Thyroid gland (tissue), 4 donors: ENCODE measurements at regions of chr2 and their contacts with region 1.

Region 1: GRCh38 chr2:26968001-26968400 is 2.4 kb upstream of the MAPRE3 start:
- DNase-seq: no peak
- H3K4me3 ChIP-seq: no peak overlapping the region
- H3K27ac ChIP-seq: no peak overlapping the region
- H3K4me1 ChIP-seq: peaks cover 5 to 8% of the 10 kb centered on the region in 2 donors
- H3K27me3 ChIP-seq: no peaks in the 10 kb centered on the region
- CTCF ChIP-seq: no peak
- POLR2A ChIP-seq: no peak

Region 2: DNA sequence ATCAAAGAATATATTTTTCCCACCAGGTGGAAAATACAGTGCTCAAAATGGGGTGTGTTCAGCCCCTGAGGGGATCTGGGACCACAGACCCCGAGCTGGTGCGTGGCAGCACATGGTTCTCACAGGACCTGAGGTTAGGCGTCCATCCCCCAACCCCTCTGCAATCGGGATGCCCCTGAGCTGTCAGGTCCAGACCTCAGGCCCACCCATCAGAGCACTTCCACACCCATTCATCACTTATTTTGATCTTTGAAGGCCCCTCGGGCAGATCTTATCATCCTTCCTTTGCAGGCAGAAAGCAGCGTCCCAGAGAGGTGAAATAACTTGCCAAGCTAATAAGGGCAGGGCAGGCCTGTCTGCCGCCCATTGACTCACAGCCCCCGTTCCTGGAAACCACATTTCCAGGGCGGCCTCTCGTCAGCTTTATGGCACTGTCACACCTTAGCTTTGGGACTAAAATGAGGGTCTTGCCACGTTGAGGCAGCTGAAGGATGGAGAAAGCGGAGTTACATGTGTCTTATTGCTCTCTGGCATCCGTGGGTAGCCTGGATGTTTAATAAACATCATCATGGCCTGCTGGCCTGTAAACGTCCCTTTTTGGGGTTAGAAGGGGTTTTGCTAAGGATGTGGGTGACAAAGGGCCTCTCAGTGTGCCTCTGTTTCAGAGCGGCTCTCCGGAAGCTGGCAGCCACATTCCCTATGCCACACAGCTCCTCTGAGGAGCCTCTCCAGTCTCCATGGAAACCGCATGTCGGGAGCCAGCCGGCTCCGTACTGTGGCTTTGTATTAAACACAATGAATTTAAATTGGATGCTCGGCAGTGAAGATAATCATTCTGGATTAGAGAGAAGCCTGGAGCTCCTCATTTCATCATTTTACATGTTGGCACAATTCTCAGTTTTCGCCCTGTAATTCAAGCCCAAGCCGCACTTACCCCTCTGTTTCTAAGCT is 55.8 kb before region 1 on chr2:
- intact Hi-C with region 1: no loop called
- DNase-seq: peak; percentile 40 to 42
- H3K4me3 ChIP-seq: no peak overlapping the region
- H3K27ac ChIP-seq: no peak overlapping the region
- H3K4me1 ChIP-seq: no peaks in the 10 kb centered on the region
- H3K27me3 ChIP-seq: peaks cover 5% of the 10 kb centered on the region
- CTCF ChIP-seq: no peak
- POLR2A ChIP-seq: no peak

Region 3: GRCh38 chr2:27016801-27017325 is 48.9 kb after region 1 on chr2:
- intact Hi-C with region 1: loop called (anchors 2 kb)
- DNase-seq: peak; percentile 72 to 76
- H3K4me3 ChIP-seq: no peak overlapping the region
- H3K27ac ChIP-seq: no peak overlapping the region
- H3K4me1 ChIP-seq: peaks cover 6 to 20% of the 10 kb centered on the region in 2 donors
- H3K27me3 ChIP-seq: no peaks in the 10 kb centered on the region
- CTCF ChIP-seq: peak in 5 of 6 experiments; percentile 49 to 80 (median 70)
- POLR2A ChIP-seq: no peak

Region 4: GRCh38 chr2:27086090-27086723 is 118.2 kb after region 1 on chr2:
- intact Hi-C with region 1: loop called (anchors 5 kb)
- DNase-seq: peak; percentile 94 to 95
- H3K4me3 ChIP-seq: peak overlapping the region; percentile 37 to 68 (median 63)
- H3K27ac ChIP-seq: peak overlapping the region; percentile 77 to 89 (median 84)
- H3K4me1 ChIP-seq: peaks cover 21 to 24% of the 10 kb centered on the region in 2 donors
- H3K27me3 ChIP-seq: no peaks in the 10 kb centered on the region
- CTCF ChIP-seq: peak; percentile 39 to 99 (median 96)
- POLR2A ChIP-seq: peak in 1 of 2 donors; percentile 62

Region 5: DNA sequence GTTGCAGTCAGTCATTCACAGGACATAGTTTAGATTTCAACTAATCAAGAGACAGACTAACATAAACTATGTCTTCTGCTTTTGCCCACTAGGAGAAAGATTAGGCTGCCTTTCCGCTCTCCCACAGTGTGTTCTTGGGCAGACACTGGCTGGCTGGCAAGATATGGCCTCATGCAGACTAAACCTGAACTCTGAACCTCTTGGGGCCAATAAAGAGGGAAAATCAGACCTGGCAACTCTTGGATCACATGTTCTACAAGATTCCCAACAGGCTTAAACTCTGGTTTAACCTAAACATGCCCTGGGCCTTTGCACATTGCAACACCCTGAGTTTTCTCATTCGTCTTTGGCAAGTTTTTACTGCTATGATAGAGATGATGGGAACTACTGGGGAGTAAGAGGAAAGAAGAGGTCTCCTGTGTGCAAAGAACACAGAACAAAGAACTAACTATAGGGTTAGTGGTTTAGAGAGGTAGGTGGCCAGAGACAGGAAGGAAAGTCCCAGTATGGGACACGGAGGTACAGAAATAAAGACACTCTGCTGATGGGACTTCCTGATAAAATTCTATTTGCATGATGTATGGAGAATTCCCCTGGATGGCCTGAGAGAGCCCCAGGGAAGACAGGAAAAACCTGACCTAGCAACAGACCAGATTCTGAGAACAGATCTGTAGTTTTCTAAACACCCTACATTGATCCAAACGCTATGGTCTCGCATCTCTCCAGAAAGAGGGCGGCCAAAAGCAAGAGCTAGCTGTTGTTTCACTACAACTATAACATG is 241.8 kb after region 1 on chr2:
- intact Hi-C with region 1: loop called (anchors 10 kb)
- DNase-seq: no peak
- H3K4me3 ChIP-seq: no peak overlapping the region
- H3K27ac ChIP-seq: no peak overlapping the region
- H3K4me1 ChIP-seq: peaks cover 10 to 14% of the 10 kb centered on the region in 2 donors
- H3K27me3 ChIP-seq: no peaks in the 10 kb centered on the region
- CTCF ChIP-seq: no peak
- POLR2A ChIP-seq: no peak

Region 6: DNA sequence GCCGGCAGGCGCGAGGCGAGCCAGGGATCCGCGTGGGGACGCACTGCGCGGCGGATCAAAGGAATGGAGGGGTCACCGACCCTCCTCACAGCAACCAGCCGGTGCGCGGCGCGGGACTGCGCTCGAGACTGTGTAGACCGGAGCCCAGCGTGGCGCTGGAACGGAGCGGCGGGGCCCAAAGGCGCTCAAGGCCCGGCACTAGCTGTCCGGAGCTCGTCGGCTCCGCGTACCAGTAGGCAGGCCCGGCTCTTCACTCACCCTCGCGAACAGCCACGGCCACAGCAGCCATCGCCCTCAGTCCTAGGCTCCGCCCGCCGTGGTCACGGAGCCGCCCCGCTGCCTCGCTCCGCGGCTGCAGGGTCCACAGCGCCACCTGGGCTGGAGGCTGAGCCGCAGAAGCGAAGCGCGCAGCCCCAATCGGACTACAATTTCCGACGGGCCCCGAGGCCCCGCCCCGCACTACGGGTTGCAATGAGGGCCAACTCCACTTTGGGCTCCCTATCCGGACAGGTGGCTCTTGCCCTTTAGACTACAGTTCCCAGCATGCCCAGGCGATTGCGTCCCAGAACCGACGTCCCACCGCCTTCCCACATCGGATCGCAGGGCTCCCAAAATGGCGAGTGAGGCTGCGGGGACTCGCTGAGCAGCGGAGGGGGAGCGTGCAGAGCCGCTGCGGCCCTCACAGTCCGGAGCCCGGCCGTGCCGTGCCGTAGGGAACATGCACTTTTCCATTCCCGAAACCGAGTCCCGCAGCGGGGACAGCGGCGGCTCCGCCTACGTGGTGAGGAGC is 402.2 kb after region 1 on chr2 and contains the starts of genes EIF2B4 and SNX17:
- intact Hi-C with region 1: no loop called
- DNase-seq: peak; percentile 99 to 100
- H3K4me3 ChIP-seq: peak within 1 kb of the TSS; percentile 81 to 94 (median 86)
- H3K27ac ChIP-seq: peak within 1 kb of the TSS; percentile 75 to 83 (median 82)
- H3K4me1 ChIP-seq: peaks cover 18 to 25% of the 10 kb centered on the region in 2 donors
- H3K27me3 ChIP-seq: no peaks in the 10 kb centered on the region
- CTCF ChIP-seq: peak in 5 of 6 experiments; percentile 31 to 88 (median 81)
- POLR2A ChIP-seq: peak; percentile 47 to 83
- total RNA-seq, gene EIF2B4: 34.7 to 44.0 (median 38.6) TPM
- total RNA-seq, gene SNX17: 109 to 148 (median 130) TPM